Activated CD8-positive, alpha-beta memory T cell treated with anti-CD3 and anti-CD28 coated beads, Interleukin-2, amount 10 ng/mL, durations not matched to agents 7 days and 5 days (primary cell): ENCODE measurements at regions of chr11 and their contacts with region 1.

Region 1: GRCh38 chr11:1694064-1694845 is 2.7 kb upstream of the KRTAP5-6 start:
- DNase-seq: peak; percentile 84
- ATAC-seq: peak; percentile 91
- H3K4me3 Mint-ChIP-seq: no peak overlapping the region
- H3K27ac Mint-ChIP-seq: no peak overlapping the region
- H3K4me1 Mint-ChIP-seq: peaks cover 9% of the 10 kb centered on the region
- H3K27me3 Mint-ChIP-seq: peaks cover 57% of the 10 kb centered on the region

Region 2: DNA sequence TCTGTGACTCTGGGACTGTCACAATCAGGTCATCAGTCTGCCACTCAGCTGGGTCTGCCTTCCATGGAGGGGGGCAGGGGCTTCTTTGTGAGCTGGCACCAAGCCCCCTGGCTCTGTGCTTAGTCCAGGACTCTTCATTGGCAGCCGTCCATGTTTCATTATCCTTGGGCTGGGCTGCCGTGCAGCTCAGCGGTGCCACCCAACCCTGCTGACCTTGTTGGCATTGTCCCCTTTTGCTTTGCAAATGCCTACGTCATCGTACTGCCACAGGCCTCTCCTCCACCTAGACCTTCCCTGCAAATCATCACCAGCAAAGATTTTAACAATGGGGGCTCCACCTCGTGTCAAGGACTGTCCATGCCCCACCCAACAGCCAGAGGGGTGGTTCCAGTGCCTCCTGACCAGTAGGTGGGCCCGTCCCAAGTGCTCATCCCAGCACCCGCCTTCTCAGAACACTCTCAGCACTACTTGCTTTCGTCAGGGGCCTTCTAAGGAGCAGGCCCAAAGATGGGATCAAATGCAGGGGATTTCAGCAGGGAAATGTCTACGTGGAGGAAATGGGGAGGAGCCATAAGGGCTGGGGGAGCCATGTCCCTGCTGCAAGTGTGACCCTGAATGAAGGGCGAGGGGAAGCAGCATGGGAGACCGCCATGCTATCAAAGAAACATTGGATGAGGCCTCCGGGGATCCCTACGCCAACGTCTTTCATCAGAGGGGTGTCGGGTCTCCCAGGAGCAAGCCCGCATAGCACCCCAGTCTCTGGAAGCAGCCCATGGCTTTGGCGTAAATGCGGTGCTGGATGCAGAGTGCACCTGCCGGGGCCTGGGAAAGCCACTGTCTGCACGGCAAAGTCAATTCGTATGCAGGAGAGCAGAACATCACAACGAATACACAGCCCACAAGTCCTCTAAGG is 21.0 kb after region 1 on chr11:
- CTCF ChIA-PET with region 1: interaction called, 13 read pairs
- DNase-seq: no peak
- ATAC-seq: no peak
- H3K4me3 Mint-ChIP-seq: no peak overlapping the region
- H3K27ac Mint-ChIP-seq: no peak overlapping the region
- H3K4me1 Mint-ChIP-seq: no peaks in the 10 kb centered on the region
- H3K27me3 Mint-ChIP-seq: peaks cover 32% of the 10 kb centered on the region

Region 3: GRCh38 chr11:1772270-1773130 is 78.2 kb after region 1 on chr11:
- CTCF ChIA-PET with region 1: interaction called, 20 read pairs
- DNase-seq: peak; percentile 84
- ATAC-seq: peak; percentile 98
- H3K4me3 Mint-ChIP-seq: peak overlapping the region; percentile 45
- H3K27ac Mint-ChIP-seq: peak overlapping the region; percentile 83
- H3K4me1 Mint-ChIP-seq: peaks cover 53% of the 10 kb centered on the region
- H3K27me3 Mint-ChIP-seq: peaks cover 3% of the 10 kb centered on the region

Region 4: GRCh38 chr11:1827095-1827813 is 133.0 kb after region 1 on chr11:
- CTCF ChIA-PET with region 1: interaction called, 533 read pairs
- DNase-seq: peak; percentile 38
- ATAC-seq: no peak
- H3K4me3 Mint-ChIP-seq: no peak overlapping the region
- H3K27ac Mint-ChIP-seq: no peak overlapping the region
- H3K4me1 Mint-ChIP-seq: peaks cover 2% of the 10 kb centered on the region
- H3K27me3 Mint-ChIP-seq: peaks cover 2% of the 10 kb centered on the region

Region 5: DNA sequence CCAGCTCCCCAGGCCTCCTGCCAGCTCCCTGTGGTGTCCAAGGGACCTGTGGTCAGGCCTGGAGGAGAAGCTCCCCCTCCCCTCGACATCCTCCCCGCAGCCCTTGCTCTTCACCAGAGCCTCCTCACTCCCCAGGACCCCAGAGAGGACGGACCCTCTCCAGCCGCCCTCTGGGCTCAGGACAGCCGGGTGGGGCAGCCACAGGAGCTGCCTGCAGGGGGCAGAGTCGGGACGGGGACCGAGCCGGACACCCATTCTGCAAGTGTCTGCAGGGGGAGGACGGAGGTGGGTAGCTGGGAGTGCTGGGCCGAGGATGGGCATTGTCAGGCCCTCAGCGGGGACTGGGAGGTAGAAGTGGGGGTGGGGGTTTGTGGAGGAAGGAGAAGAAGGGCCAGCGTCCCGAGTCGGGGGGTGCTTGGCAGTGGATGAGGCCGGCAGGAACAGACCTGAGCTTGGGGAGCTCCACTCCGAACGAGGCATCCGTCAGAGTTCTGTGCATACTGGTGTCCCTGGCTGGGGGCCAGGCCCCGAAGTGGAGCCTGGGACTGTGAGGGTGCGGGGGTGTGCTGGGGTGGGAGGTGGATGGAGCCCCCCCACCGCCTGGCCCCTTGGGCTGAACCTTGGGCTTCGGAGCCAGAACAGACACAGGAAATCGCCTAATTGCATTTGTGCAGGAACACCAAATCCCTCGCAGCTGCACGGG is 182.3 kb after region 1 on chr11:
- CTCF ChIA-PET with region 1: interaction called, 17 read pairs
- DNase-seq: no peak
- ATAC-seq: no peak
- H3K4me3 Mint-ChIP-seq: no peak overlapping the region
- H3K27ac Mint-ChIP-seq: no peak overlapping the region
- H3K4me1 Mint-ChIP-seq: peaks cover 15% of the 10 kb centered on the region
- H3K27me3 Mint-ChIP-seq: no peaks in the 10 kb centered on the region

Region 6: DNA sequence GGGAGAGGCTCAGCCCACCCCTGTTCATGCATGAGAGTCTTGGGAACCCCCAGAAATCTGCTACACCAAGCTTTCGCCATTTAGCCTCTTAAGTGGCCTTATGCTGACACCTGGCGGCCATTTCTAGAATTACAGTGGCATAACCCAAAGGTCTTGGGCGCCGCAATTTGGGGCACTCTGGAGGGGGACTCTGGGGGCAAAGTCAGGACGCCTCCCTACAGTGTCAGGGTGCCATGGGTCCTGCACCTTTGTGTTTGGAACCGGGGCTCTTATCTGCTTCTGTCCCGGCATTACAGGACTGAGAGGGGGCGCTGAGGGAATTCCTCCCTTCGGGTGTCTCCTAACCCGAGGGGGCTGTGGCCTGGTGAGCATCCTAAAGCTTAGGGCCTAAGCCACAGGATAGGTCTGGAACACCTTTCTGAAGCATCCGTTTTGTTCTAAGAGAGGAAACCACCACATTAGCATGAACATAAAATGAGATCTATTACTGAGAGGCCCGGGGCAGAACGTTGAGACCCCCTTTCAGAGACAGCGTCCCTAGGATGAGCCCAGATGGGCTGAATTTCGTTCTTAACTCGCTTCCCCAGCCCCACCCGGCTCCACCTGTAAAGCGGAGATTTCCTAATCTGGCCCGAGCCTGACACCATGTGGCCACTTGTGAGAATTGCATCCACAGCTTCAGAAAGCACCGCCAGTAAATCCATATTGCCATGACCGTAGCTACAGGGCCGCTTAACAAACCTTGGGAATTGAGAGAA is 457.4 kb after region 1 on chr11:
- CTCF ChIA-PET with region 1: interaction called, 48 read pairs
- DNase-seq: peak; percentile 85
- ATAC-seq: peak; percentile 77
- H3K4me3 Mint-ChIP-seq: no peak overlapping the region
- H3K27ac Mint-ChIP-seq: no peak overlapping the region
- H3K4me1 Mint-ChIP-seq: peaks cover 3% of the 10 kb centered on the region
- H3K27me3 Mint-ChIP-seq: peaks cover 37% of the 10 kb centered on the region